Mucosa of descending colon (tissue), 3 donors: ENCODE measurements at regions of chr2 and their contacts with region 1.

Region 1: GRCh38 chr2:231674587-231675338 is 33.6 kb upstream of the PTMA start:
- DNase-seq: peak; percentile 81 to 88 (median 87)
- ATAC-seq: peak; percentile 30
- H3K4me3 ChIP-seq: no peak overlapping the region
- H3K4me1 ChIP-seq: peaks cover 51% of the 10 kb centered on the region
- CTCF ChIP-seq: peak; percentile 45

Region 2: DNA sequence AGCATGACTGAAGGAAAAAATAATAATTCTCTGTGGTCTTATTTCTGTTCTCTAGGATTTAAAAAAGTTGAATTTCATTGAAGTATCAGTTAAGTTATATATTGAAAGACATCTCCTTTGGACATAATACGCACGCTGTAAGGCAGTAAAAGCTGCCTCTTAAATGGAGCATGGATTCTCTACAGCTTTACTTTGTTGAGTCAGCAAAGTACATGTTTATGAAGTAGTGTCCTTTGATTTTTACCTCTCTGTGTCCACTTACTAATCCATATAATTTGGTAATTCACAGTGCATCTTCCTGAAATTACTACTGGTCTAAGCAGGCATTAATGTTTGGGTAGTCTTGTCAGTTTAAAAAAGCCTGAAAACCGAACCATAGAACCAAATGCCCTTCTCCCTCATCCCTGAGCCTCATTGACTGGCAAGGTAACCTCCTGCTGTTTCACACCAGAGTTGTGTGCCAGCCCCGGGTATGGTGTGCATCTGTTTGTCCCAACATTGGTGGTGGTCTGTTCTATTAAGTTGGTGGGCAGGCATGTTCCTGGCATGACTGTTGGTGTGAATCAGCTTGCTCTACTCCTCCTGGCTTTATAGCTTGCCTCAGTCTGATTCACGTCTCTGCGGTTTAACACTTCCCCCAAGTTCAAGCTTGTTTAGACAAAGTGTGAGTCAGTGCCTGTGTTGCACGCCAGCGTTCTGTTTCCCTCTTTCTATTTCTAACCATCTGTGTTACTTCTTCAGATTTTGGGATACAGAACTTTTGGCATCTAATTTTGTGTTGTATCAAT is 881.0 kb before region 1 on chr2:
- intact Hi-C with region 1: no loop called
- DNase-seq: peak in 2 of 3 donors; percentile 45 to 70
- ATAC-seq: peak; percentile 90
- H3K4me3 ChIP-seq: no peak overlapping the region
- H3K4me1 ChIP-seq: peaks cover 28% of the 10 kb centered on the region
- CTCF ChIP-seq: no peak

Region 3: DNA sequence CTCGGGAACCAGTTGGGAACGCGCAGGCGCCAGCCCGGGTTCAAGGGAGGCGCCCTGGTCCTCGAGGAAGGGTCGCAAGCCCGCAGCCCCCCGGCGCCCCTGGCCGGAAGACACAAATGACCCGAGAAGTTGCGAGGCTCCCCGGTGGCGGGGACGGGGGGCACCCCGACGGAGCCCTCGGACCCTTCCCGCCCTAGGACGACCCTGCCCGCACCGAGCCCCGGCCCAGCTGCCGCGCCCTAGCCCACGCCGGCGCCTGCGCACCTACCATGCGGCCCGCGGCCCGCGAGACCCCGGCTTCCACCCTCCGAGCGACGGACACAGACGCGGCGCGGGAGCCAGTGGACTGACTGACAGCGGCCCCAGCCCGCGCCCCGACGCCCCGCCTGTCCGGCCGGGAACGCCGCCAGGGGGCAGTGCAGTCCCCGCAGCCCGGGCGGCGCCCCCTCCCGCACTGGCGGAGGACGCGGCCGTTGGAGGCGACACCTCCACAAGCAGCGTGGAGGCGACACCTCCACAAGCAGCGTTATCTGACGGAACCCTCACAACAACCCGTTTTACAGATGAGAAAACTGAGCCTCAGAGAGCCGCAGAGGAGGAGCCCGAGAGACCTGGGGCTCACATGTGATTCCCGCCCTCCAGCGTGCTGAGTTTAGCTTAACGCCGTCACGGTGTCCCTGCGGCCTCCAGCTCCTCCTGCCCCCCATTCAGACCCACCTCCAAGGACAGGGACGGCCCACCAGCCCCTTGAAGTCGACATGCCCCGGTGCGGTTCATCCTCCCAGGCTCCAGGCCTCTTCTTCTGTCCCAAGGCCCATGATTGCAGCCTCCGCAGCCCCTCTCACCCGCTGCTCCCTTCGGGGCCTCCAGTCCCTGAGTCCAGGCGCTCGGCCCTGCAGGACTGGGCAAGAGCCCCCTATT is 144.4 kb before region 1 on chr2 and contains the start of gene NMUR1:
- intact Hi-C with region 1: no loop called
- DNase-seq: peak; percentile 68 to 80 (median 75)
- ATAC-seq: peak; percentile 91
- H3K4me3 ChIP-seq: no peak within 1 kb of the TSS
- H3K4me1 ChIP-seq: no peaks in the 10 kb centered on the region
- CTCF ChIP-seq: peak; percentile 80
- total RNA-seq, gene NMUR1: 0.57 to 1.2 (median 0.87) TPM

Region 4: GRCh38 chr2:231612179-231613053 is 62.3 kb before region 1 on chr2:
- intact Hi-C with region 1: loop called (anchors 2 to 5 kb)
- DNase-seq: peak; percentile 96
- ATAC-seq: peak; percentile 70
- H3K4me3 ChIP-seq: no peak overlapping the region
- H3K4me1 ChIP-seq: peaks cover 38% of the 10 kb centered on the region
- CTCF ChIP-seq: peak; percentile 96

Region 5: DNA sequence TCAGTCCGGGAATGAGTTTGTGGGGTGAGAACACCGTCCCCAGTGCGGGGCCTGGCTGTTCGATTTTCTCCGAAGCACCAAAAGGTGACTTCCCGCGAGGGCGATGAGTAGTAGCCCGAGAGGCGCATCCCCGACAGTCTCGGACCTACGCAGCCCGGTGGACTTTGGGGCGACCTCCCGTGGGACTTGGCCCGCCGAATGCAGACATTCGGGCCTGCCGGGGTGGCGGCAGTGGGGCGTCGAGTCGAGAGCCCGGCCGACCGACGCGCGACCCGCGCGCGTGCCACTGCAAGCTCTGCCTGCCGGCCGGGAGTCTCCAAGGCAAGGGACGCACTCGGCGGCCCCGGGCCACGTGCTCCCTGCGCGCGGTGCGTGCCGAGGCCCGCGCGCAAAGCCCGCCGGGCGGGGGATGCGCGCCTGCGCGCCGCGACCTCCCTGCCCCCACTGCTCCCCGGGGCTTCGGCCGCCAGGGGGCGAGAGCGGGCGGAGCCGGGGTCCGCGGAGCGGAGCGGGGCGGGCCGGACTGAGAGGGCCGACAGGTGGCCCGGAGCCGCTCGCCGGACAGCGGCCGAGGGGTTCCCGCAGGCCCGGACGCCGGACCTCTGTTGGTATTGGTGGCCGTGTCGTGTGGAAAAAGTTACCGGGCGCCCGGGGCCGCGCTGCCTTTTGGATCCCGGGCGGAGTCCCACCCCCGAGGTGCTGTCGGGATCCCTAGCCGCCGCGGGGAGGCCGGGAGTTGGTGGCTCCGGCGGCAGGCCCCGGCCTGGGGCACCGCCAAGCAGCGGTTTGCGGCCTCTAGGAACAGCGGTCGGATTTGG is 35.4 kb after region 1 on chr2:
- intact Hi-C with region 1: loop called (anchors 1 to 2 kb)
- DNase-seq: peak; percentile 86 to 96 (median 90)
- ATAC-seq: peak; percentile 42
- H3K4me3 ChIP-seq: peak overlapping the region; percentile 100
- H3K4me1 ChIP-seq: peaks cover 26% of the 10 kb centered on the region
- CTCF ChIP-seq: peak; percentile 95

Region 6: GRCh38 chr2:232230557-232230956 is 555.8 kb after region 1 on chr2:
- intact Hi-C with region 1: no loop called
- DNase-seq: peak in 1 of 3 donors; percentile 60
- ATAC-seq: peak; percentile 37
- H3K4me3 ChIP-seq: no peak overlapping the region
- H3K4me1 ChIP-seq: peaks cover 8% of the 10 kb centered on the region
- CTCF ChIP-seq: no peak